ENCODE measurements at regions of chr1 and their contacts with region 1.

Region 1: GRCh38 chr1:179012038-179012437 is 13.7 kb upstream of the FAM20B start:
- DNase-seq: no peak
- CTCF ChIP-seq: no peak

Region 2: DNA sequence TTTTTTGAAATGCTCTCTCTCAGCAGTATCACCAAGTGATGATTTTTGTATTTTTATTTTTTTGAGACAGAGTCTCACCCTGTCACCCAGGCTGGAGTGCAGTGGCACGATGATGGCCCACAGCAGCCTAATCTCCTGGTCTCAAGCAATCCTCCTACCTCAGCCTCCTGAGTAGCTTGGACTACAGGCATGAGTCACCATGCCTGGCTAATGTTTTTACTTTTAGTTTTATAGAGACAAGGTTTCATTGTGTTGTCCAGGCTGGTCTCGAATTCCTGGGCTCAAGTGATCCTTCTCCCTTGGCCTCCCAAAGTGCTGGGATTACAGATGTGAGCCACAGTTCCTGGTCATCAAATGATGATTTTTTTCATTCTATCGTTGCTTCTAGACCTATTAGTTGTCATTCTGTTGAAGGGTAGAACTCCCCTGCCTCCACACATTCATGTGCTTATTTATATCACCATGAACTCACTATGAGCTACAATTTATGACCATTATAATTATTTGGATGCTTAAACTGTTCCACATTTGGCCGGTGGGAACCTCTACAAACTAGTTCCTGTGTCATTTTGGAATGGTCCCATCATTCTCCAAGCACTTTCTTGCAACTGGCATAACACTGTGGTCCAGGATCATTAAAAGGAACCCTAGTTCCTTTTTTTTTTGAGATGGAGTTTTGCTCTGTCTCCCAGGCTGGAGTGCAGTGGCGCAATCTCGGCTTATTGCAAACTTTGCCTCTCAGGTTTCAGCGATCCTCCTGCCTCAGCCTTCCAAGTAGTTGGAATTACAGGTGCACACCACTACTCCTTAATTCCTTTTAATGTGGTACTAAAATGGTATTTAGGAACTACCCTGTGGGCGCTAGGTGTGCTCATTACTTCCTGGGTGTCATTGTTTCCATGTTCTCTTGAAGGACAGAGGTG is 49.6 kb after region 1 on chr1:
- in situ Hi-C with region 1: loop called (anchors 5 kb)
- DNase-seq: no peak
- CTCF ChIP-seq: no peak